Ascending aorta (tissue), 2 donors: ENCODE measurements at regions of chr16 and their contacts with region 1.

Region 1: GRCh38 chr16:17334096-17334495 is 136.7 kb downstream of the XYLT1 start:
- DNase-seq: peak; percentile 45 to 88
- H3K4me3 ChIP-seq: no peak overlapping the region
- H3K27ac ChIP-seq: peak overlapping the region; percentile 62 to 74
- H3K4me1 ChIP-seq: peaks cover 2 to 29% of the 10 kb centered on the region in 2 donors
- H3K27me3 ChIP-seq: no peaks in the 10 kb centered on the region
- CTCF ChIP-seq: no peak

Region 2: DNA sequence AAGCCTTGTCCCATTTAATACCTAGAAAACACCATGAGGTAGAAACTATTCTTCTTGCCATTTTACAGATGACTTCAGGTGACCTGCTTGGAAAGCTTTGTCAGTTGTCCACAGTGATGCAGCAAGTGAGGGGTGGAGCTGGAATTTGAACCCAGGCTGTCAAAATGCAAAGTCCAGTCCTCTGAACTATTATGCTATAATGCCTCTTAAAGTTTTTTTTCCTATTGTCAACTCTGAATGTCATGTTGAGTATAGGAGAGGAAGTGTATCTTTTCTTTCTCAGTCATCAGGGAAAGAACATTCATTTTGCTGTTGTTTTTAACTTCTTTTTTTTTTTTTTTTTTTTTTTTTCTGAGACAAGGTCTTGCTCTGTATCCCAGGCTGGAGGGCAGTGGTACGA is 388.9 kb before region 1 on chr16:
- intact Hi-C with region 1: no loop called
- DNase-seq: no peak
- H3K4me3 ChIP-seq: no peak overlapping the region
- H3K27ac ChIP-seq: no peak overlapping the region
- H3K4me1 ChIP-seq: no peaks in the 10 kb centered on the region
- H3K27me3 ChIP-seq: no peaks in the 10 kb centered on the region
- CTCF ChIP-seq: no peak

Region 3: DNA sequence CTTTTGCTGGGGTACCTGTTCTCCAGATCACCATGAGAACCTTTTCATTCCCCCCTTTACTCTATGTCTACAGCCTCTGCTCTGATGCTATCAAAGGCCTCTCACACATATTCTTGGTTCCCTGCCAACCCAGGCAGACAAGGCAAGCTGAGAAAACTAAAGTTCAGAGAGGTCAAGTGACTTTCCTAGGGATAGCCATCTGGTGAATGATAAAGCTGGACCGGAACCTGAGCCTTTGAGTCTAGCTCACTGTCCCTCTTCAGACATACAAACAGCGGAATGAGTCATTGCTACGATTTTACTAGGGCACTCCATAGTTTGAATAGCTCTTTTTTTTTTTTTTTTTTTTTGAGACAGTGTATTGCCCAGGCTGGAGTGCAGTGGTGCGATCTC is 63.4 kb after region 1 on chr16:
- intact Hi-C with region 1: loop called (anchors 2 kb)
- DNase-seq: no peak
- H3K4me3 ChIP-seq: no peak overlapping the region
- H3K27ac ChIP-seq: peak overlapping the region; percentile 36 to 42
- H3K4me1 ChIP-seq: peaks cover 4 to 21% of the 10 kb centered on the region in 2 donors
- H3K27me3 ChIP-seq: no peaks in the 10 kb centered on the region
- CTCF ChIP-seq: no peak

Region 4: GRCh38 chr16:17404941-17405689 is 71.0 kb after region 1 on chr16:
- intact Hi-C with region 1: loop called (anchors 2 kb)
- DNase-seq: peak; percentile 84 to 94
- H3K4me3 ChIP-seq: peak overlapping the region; percentile 2 to 39
- H3K27ac ChIP-seq: peak overlapping the region; percentile 86 to 96
- H3K4me1 ChIP-seq: peaks cover 4 to 22% of the 10 kb centered on the region in 2 donors
- H3K27me3 ChIP-seq: no peaks in the 10 kb centered on the region
- CTCF ChIP-seq: no peak

Region 5: DNA sequence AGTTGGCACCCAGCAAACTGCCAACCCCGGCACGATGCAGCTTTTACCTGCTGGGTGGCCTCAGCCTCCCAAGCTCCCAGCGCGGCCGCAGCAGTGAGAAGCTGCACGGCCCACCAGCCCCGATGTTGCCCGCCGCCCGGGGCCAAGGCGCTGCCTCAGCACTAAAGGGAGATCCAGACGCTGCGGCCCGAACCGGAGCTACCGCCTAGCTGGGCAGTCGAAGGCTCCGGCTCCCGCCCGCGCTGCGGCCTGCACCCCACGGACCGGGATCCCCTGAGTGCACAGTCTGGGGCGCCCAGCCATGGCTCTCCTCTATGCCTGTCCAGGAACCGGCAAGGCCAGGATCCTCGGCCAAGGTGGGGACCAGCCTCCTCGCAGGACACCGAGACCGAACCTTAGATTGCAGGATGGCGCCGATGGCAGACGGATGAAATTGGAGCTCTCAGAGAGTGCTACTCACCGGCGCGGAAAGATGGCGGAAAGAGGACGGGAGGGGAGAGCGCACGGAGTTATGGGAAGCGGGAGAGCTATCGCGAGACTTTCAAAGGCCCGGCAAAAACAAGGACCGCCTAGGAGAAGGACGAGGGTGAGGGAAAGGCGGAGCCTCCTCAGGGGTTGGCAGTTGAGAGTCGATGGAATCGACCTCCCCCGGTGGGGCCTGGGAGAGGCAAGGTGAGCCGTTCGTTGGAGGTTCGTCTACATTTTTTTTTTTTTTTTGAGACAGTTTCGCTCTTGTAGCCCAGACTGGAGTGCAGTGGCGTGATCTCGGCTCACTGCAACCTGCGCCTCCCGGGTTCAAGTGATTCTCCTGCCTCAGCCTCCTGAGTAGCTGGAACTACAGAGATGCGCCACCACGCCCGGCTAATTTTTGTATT is 1456.0 kb after region 1 on chr16 and contains the start of gene RPS15A:
- intact Hi-C with region 1: loop called (anchors 10 kb)
- DNase-seq: peak; percentile 77 to 97
- H3K4me3 ChIP-seq: peak within 1 kb of the TSS; percentile 69 to 72
- H3K27ac ChIP-seq: peak within 1 kb of the TSS; percentile 62 to 79
- H3K4me1 ChIP-seq: peaks cover 6 to 24% of the 10 kb centered on the region in 2 donors
- H3K27me3 ChIP-seq: no peaks in the 10 kb centered on the region
- CTCF ChIP-seq: no peak
- total RNA-seq, gene RPS15A: 540 TPM